Uterus (tissue), 4 donors: ENCODE measurements at regions of chr7 and their contacts with region 1.

Region 1: DNA sequence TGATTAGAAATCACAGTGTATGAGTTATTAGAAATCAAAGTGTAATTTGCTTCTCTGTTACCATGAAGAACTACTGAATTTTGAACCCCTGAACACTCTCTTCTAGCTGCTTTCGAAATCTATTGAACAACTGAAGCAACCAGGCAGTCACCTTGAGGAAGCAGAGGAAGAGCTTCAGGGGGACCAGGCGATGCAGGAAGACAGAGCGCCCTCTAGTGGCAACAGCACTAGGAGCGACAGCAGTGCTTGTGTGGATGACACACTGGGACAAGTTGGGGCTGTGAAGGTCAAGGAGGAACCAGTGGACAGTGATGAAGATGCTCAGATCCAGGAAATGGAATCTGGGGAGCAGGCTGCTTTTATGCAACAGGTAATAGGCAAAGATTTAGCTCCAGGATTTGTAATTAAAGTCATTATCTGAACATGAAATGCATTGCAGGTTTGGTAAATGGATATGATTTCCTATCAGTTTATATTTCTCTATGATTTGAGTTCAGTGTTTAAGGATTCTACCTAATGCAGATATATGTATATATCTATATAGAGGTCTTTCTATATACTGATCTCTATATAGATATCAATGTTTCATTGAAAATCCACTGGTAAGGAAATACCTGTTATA is 170.7 kb downstream of the HDAC9 start:
- DNase-seq: peak; percentile 70 to 78
- H3K4me3 ChIP-seq: no peak overlapping the region
- H3K27ac ChIP-seq: no peak overlapping the region
- H3K4me1 ChIP-seq: no peaks in the 10 kb centered on the region
- H3K27me3 ChIP-seq: no peaks in the 10 kb centered on the region
- CTCF ChIP-seq: peak; percentile 64 to 87 (median 76)
- POLR2A ChIP-seq: no peak

Region 2: GRCh38 chr7:18352339-18353255 is 313.6 kb before region 1 on chr7:
- intact Hi-C with region 1: loop called (anchors 10 kb)
- DNase-seq: peak; percentile 30 to 54
- H3K4me3 ChIP-seq: peak overlapping the region in 1 of 2 donors; percentile 4
- H3K27ac ChIP-seq: peak overlapping the region; percentile 36 to 56
- H3K4me1 ChIP-seq: peaks cover 0 to 5% of the 10 kb centered on the region in 2 donors
- H3K27me3 ChIP-seq: no peaks in the 10 kb centered on the region
- CTCF ChIP-seq: peak; percentile 53 to 73 (median 67)
- POLR2A ChIP-seq: no peak

Region 3: DNA sequence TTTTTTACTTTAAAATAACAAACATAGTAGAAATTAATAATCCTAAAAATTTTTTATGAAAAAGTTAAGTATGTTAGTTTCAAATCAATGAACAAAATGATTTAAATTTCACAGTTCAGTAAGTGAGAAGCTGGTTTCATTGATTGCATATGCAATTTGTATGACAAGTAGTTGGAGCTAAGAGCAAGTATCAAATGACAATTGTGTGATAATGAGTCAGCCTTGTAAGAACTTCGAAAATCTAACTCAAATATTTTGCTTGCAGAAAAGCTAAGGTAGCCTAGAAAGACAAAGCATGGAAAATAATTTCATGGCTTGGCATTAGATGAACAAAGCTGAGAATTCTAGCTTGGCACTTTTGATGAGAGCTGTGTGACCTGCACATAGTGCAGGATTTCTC is 59.2 kb before region 1 on chr7:
- intact Hi-C with region 1: no loop called
- DNase-seq: no peak
- H3K4me3 ChIP-seq: no peak overlapping the region
- H3K27ac ChIP-seq: no peak overlapping the region
- H3K4me1 ChIP-seq: no peaks in the 10 kb centered on the region
- H3K27me3 ChIP-seq: no peaks in the 10 kb centered on the region
- CTCF ChIP-seq: no peak
- POLR2A ChIP-seq: no peak

Region 4: DNA sequence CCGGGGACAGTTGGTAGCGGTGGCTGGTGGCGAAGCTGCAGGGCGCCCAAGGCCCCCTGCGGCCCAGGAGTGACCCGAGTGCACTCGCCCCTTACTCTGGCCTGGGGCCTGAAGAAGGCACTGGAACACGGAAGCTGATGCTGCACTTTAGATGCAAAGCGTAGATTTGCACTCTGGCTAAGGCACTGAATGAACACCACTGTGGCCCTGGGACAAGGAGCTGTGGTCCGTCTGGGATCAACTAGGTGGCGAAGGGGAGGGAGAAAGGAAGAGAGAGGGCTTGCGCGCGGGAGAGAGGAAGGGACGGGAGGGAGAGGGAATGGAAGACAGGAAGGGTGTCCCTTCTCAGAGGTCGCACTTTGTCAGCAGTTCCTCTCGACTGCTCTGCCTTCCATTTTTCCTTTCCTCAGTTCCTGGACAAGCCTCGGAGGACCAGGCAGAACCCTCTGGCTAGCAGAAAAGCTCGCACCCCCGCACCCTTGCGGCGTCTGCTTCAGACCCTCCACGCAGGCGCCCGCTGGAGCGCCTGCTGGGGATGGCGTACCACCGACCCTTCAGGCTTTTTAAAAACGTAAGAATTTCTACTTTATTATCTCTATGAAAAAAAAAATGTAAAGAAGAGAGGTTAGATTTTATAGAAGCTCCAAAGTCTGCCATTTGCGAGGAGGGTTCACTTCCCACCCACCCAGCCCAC is 477.8 kb after region 1 on chr7:
- intact Hi-C with region 1: no loop called
- DNase-seq: no peak
- H3K4me3 ChIP-seq: no peak overlapping the region
- H3K27ac ChIP-seq: no peak overlapping the region
- H3K4me1 ChIP-seq: no peaks in the 10 kb centered on the region
- H3K27me3 ChIP-seq: peaks cover 0 to 30% of the 10 kb centered on the region in 2 donors
- CTCF ChIP-seq: no peak
- POLR2A ChIP-seq: no peak